Activated B cell treated with CpG ODN at 0.5 μM for 24 hours (primary cell): ENCODE measurements at regions of chr11 and their contacts with region 1.

Region 1: DNA sequence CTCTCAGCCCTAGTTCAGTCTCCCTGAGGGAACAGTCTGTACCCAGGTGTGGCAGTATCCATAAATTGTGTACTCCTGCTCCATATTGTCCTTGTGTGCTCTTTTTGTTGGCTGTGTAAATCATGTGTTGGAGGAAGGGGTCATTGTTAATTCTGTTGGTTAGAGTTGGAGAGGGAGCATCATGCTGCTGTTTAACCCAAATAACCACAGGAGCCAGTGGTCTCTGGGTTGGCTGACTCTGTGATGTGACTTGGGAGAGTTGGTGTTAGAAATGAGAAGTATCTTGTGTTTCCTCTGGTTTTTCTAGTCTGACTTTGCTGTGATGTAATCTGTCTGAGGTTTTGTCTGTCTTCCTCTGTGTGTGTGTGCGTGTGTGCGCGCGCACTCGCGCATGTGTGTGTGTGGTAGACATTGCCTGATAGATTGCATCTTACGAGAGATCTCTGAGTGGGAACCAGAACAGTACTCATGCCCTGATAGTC is 30.5 kb downstream of the CTNND1 start:
- DNase-seq: peak; percentile 71
- ATAC-seq: peak; percentile 89
- H3K4me3 Mint-ChIP-seq: peak overlapping the region; percentile 75
- H3K27ac Mint-ChIP-seq: peak overlapping the region; percentile 90
- H3K4me1 Mint-ChIP-seq: peaks cover 73% of the 10 kb centered on the region
- H3K27me3 Mint-ChIP-seq: no peaks in the 10 kb centered on the region
- CTCF ChIP-seq: no peak

Region 2: GRCh38 chr11:57406337-57406904 is 385.7 kb before region 1 on chr11:
- CTCF ChIA-PET with region 1: no interaction called
- POLR2A ChIA-PET with region 1: no interaction called
- intact Hi-C with region 1: loop called (anchors 2 kb)
- DNase-seq: no peak
- ATAC-seq: peak; percentile 80
- H3K4me3 Mint-ChIP-seq: peak overlapping the region; percentile 40
- H3K27ac Mint-ChIP-seq: peak overlapping the region; percentile 88
- H3K4me1 Mint-ChIP-seq: peaks cover 50% of the 10 kb centered on the region
- H3K27me3 Mint-ChIP-seq: no peaks in the 10 kb centered on the region
- CTCF ChIP-seq: no peak

Region 3: DNA sequence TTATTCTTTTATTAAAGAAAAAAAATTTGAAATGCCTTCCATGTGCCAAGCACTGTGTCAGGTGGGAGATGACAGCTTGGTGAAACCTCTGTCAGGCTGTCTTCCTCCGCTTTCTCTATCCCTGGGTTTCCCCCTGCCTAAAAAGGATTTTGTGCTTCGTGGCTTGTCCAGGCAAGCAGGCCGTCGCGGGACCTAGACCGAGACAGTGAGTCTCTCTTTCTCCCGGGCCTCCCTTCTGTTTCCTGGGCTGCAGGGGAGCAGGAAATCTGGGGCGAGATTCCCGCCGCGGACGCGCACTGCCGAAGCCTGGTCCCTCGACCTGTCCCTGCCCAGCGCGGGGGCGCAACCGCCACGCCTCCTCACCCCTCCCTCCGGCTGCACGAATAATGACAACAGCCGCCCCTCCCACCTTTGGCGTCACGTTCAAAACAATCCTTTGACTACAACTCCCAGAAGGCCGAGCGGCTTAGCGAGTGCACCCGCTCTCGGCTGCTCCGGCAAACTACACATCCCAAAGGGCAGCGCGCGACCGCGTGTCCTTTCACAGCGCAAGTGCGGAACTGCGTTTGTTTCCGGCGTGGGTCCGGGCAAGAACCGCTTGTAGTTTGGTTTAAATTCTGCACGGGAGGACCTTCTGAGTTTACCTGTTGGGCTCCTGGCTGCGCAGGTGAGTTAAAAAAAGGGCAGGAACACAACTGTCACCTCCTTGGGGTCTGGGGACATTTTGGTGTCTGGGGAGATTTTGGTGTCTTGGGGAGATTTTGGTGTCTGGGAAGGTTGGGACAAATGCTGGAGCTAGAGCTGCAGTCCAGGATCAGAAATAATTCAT is 134.7 kb before region 1 on chr11 and contains the start of gene CLP1:
- CTCF ChIA-PET with region 1: no interaction called
- POLR2A ChIA-PET with region 1: no interaction called
- intact Hi-C with region 1: loop called (anchors 1 kb)
- DNase-seq: peak; percentile 96
- ATAC-seq: peak; percentile 97
- H3K4me3 Mint-ChIP-seq: peak within 1 kb of the TSS; percentile 99
- H3K27ac Mint-ChIP-seq: peak within 1 kb of the TSS; percentile 94
- H3K4me1 Mint-ChIP-seq: peaks cover 23% of the 10 kb centered on the region
- H3K27me3 Mint-ChIP-seq: no peaks in the 10 kb centered on the region
- CTCF ChIP-seq: no peak
- total RNA-seq, gene CLP1: 20.4 and 20.9 TPM in 2 replicates

Region 4: DNA sequence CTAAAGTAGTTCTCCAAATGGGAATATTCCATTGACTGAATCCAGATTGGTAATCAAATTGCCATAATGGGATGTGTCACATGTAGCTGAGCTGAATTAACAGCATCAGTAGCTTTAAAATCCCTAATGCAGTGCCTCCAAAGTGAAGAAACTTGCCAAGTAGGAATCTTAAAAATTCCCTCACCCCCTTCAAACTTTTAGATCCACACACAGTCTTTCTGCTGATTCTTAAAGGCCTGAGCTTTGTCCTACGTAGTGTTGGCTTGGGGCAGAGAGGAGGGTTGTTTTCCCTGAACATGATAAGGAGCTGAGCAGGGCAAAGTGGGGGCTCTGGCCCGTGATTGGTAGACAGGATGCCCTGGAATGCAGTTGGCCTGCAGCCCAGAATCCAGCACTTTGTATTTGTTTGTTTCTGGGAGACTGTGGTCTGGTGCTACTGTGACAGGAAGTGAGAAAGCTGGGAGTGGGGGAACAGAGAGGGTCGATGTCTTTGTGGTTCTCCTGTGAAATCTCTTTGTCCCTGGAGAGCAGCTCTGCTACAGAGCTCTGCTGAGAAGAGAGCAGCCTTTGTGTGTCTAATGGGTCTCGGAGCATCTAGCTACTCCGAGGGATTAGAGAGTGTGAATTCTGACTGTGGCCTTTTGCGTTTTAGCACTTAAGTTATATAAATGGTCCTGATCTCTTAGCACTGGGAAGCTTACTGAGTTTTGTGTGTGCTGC is 13.6 kb before region 1 on chr11:
- CTCF ChIA-PET with region 1: no interaction called
- POLR2A ChIA-PET with region 1: interaction called, 13 read pairs
- intact Hi-C with region 1: no loop called
- DNase-seq: no peak
- ATAC-seq: no peak
- H3K4me3 Mint-ChIP-seq: no peak overlapping the region
- H3K27ac Mint-ChIP-seq: peak overlapping the region; percentile 4
- H3K4me1 Mint-ChIP-seq: peaks cover 51% of the 10 kb centered on the region
- H3K27me3 Mint-ChIP-seq: no peaks in the 10 kb centered on the region
- CTCF ChIP-seq: no peak

Region 5: DNA sequence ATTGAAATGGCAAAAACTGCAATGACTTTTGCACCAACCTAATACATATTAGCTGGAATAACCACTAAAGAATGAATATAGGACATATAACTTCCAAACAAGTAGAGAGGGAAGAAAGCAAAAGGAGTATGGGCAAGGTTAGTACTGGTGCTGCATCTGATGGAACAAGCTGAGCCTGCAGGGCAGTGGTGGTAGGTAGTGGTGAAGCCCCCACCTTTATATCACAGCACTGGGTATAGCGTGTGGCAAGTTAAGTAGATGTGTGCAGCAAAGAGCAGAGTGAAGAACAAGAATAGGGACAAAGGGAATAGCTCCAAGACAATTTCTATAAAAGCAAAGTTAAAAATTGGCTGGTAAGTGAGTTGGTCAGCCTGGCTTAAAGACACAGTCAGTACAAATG is 31.8 kb after region 1 on chr11:
- CTCF ChIA-PET with region 1: no interaction called
- POLR2A ChIA-PET with region 1: no interaction called
- intact Hi-C with region 1: no loop called
- DNase-seq: no peak
- ATAC-seq: no peak
- H3K4me3 Mint-ChIP-seq: no peak overlapping the region
- H3K27ac Mint-ChIP-seq: no peak overlapping the region
- H3K4me1 Mint-ChIP-seq: no peaks in the 10 kb centered on the region
- H3K27me3 Mint-ChIP-seq: no peaks in the 10 kb centered on the region
- CTCF ChIP-seq: no peak